Activated naive CD4-positive, alpha-beta T cell treated with anti-CD3 and anti-CD28 coated beads, Interleukin-2, amount 10 ng/mL, durations not matched to agents 7 days and 5 days (primary cell): ENCODE measurements at regions of chr1 and their contacts with region 1.

Region 1: GRCh38 chr1:209248649-209249279 is 334.8 kb upstream of the CAMK1G start:
- DNase-seq: peak; percentile 63
- H3K4me3 Mint-ChIP-seq: no peak overlapping the region
- H3K27ac Mint-ChIP-seq: no peak overlapping the region
- H3K4me1 Mint-ChIP-seq: no peaks in the 10 kb centered on the region
- H3K27me3 Mint-ChIP-seq: no peaks in the 10 kb centered on the region

Region 2: DNA sequence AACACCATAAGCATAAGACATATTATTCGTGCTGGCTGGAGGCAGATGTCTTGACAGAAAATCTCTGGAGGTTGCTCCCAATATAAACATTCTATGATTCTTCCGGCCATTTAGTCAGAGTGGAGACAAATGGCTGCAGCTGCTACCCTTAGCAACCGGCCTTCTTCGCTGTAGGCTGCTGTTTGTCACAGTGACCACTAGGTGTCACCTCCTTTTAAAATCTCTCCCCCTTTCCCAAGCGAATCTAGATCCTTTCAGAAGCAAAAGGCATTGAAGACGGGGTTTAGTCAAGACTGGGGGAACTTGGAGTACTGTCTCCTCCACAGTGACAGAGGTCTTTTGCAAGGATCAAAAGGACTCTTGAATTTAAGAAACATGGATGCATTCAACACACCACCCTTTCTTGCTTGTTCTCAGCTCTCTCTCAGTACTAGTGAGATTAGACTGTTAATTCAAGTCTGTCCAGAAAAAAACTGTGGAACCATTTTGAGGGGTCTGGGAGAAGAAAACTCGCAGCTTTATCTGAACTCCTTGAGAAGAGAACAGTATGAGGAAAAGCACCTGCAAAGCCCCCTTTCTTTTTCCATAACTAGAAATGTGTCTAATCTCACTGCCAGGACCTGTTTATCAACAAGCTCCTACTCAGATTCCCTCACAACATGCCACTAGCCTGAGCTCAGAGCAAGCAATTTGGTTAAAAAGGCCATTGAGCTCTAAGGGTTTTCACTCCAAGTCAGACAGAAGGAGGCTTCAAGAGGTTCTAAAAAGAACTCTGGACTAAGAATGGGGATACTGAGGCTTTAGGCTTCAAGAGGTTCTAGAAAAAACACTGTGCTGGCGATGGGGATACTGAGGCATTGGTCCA is 596.2 kb before region 1 on chr1:
- CTCF ChIA-PET with region 1: interaction called, 14 read pairs
- DNase-seq: peak; percentile 36
- H3K4me3 Mint-ChIP-seq: no peak overlapping the region
- H3K27ac Mint-ChIP-seq: no peak overlapping the region
- H3K4me1 Mint-ChIP-seq: no peaks in the 10 kb centered on the region
- H3K27me3 Mint-ChIP-seq: peaks cover 6% of the 10 kb centered on the region

Region 3: DNA sequence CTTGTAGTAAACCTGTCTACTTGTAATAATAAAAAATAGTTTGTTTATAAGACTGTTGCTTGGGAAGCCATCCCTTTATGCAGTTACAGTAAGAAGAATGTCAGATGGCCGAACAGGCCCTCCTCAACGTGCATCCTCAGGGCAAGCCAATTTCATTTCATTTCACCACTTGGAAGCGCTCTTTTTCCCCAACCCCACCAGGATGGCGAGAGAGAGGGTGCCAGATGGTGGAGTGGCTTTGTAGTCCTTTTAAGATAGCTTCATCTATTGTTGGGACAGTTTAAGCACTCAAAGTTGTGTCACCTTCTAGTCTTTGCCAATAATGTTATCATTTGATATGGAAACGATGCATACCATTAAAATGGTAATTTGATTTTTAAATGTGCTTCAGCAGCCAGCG is 21.6 kb before region 1 on chr1:
- CTCF ChIA-PET with region 1: no interaction called
- DNase-seq: no peak
- H3K4me3 Mint-ChIP-seq: no peak overlapping the region
- H3K27ac Mint-ChIP-seq: no peak overlapping the region
- H3K4me1 Mint-ChIP-seq: no peaks in the 10 kb centered on the region
- H3K27me3 Mint-ChIP-seq: peaks cover 3% of the 10 kb centered on the region

Region 4: DNA sequence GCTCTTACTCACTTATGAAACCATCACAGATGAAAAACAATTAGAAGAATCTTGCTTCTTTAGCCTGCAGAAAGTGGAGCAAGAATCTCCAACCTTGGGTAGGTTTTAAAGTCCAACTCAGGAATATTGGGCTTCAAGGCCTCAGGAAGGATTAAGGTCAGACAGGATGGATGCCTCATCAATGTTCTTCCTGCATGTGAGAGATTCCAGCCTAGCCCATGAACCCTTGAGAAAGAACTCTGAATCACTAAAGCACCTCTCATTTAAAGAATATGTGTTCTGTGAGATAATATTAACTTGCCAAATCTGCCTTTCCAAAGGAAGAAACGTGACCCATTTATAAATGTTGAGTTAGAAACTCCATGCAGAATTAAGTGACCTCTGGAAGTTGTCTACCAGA is 10.4 kb before region 1 on chr1:
- CTCF ChIA-PET with region 1: interaction called, 15 read pairs
- DNase-seq: no peak
- H3K4me3 Mint-ChIP-seq: no peak overlapping the region
- H3K27ac Mint-ChIP-seq: no peak overlapping the region
- H3K4me1 Mint-ChIP-seq: no peaks in the 10 kb centered on the region
- H3K27me3 Mint-ChIP-seq: peaks cover 4% of the 10 kb centered on the region

Region 5: DNA sequence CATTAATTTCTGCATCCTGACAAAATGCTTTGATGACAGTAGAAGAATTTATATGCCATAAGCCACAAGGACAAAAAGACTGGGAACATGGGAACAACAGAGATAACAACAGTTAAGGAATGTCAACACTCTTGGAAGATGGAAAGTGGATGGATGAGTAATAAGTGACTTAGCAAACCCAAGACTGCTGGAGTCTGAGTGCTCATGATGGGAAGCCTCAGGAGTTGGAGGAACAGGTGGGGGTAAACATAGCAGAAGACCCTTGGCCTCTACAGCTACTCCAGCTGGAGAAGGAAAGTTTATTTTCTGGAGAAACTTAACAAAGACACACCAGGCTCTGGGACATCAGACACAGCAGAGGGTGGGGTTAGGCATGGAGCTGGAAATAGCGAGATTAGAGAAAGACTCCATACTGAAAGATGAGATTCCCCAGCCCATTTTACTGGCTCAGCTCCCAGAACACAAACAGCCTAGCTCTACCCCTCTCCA is 440.0 kb after region 1 on chr1:
- CTCF ChIA-PET with region 1: no interaction called
- DNase-seq: no peak
- H3K4me3 Mint-ChIP-seq: no peak overlapping the region
- H3K27ac Mint-ChIP-seq: no peak overlapping the region
- H3K4me1 Mint-ChIP-seq: peaks cover 75% of the 10 kb centered on the region
- H3K27me3 Mint-ChIP-seq: peaks cover 11% of the 10 kb centered on the region